ENCODE measurements at regions of chr5 and their contacts with region 1.

Region 1: GRCh38 chr5:5421961-5422818 is at the start of gene ICE1:
- DNase-seq: peak; percentile 95 to 98
- ATAC-seq: peak; percentile 88 to 95 (median 88)
- H3K4me3 ChIP-seq: peak within 1 kb of the TSS; percentile 83
- H3K4me3 Mint-ChIP-seq: no peak within 1 kb of the TSS
- H3K27ac ChIP-seq: peak within 1 kb of the TSS; percentile 100
- H3K27ac Mint-ChIP-seq: no peak within 1 kb of the TSS
- H3K4me1 ChIP-seq: peaks cover 27% of the 10 kb centered on the region
- H3K4me1 Mint-ChIP-seq: peaks cover 18 to 19% of the 10 kb centered on the region in 2 donors
- H3K27me3 ChIP-seq: no peaks in the 10 kb centered on the region
- H3K27me3 Mint-ChIP-seq: no peaks in the 10 kb centered on the region
- CTCF ChIP-seq: no peak
- total RNA-seq, gene ICE1: 29.7 to 44.5 (median 36.6) TPM

Region 2: DNA sequence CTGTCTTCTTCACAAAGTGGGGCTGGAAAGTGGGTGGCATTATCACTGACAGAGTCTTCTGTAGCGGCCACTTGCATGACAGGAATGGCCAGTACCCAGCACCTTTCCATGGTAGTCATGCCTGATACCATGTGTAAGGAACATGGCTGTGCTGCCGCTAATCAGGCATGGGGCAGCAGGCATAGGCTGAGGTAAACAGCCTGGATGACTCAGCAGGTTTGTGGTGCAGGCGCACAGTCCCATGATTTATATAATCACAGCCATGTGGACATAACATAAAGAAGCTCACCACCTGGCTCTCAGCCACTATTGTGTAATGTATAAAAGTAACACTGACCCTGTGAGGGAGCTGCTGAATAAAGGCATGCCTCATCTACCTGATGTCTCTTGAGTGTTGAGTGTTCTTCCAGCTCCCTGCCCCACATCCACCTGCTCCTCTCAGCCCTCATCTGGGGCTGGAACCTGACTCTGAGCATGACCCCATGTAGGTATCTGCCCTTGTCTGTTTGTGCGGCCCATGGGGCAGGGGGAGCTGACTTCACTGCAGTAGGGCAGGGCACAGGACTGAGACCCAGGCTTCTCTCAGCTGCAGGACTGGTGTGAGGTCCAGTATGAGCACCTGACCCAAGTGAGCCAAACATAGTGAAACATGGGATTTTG is 12.9 kb before region 1 on chr5:
- intact Hi-C with region 1: no loop called
- DNase-seq: peak in 1 of 2 donors; percentile 44
- ATAC-seq: no peak
- H3K4me3 ChIP-seq: no peak overlapping the region
- H3K4me3 Mint-ChIP-seq: no peak overlapping the region
- H3K27ac ChIP-seq: no peak overlapping the region
- H3K27ac Mint-ChIP-seq: no peak overlapping the region
- H3K4me1 ChIP-seq: no peaks in the 10 kb centered on the region
- H3K4me1 Mint-ChIP-seq: no peaks in the 10 kb centered on the region
- H3K27me3 ChIP-seq: no peaks in the 10 kb centered on the region
- H3K27me3 Mint-ChIP-seq: no peaks in the 10 kb centered on the region
- CTCF ChIP-seq: no peak

Region 3: GRCh38 chr5:5523066-5523505 is 100.9 kb after region 1 on chr5:
- intact Hi-C with region 1: loop called (anchors 1 kb)
- DNase-seq: peak in 1 of 2 donors; percentile 80
- ATAC-seq: peak; percentile 72 to 94 (median 92)
- H3K4me3 ChIP-seq: peak overlapping the region; percentile 31
- H3K4me3 Mint-ChIP-seq: peak overlapping the region; percentile 76
- H3K27ac ChIP-seq: peak overlapping the region; percentile 58
- H3K27ac Mint-ChIP-seq: peak overlapping the region; percentile 75 to 87
- H3K4me1 ChIP-seq: peaks cover 5% of the 10 kb centered on the region
- H3K4me1 Mint-ChIP-seq: peaks cover 13 to 17% of the 10 kb centered on the region in 2 donors
- H3K27me3 ChIP-seq: no peaks in the 10 kb centered on the region
- H3K27me3 Mint-ChIP-seq: no peaks in the 10 kb centered on the region
- CTCF ChIP-seq: no peak

Region 4: DNA sequence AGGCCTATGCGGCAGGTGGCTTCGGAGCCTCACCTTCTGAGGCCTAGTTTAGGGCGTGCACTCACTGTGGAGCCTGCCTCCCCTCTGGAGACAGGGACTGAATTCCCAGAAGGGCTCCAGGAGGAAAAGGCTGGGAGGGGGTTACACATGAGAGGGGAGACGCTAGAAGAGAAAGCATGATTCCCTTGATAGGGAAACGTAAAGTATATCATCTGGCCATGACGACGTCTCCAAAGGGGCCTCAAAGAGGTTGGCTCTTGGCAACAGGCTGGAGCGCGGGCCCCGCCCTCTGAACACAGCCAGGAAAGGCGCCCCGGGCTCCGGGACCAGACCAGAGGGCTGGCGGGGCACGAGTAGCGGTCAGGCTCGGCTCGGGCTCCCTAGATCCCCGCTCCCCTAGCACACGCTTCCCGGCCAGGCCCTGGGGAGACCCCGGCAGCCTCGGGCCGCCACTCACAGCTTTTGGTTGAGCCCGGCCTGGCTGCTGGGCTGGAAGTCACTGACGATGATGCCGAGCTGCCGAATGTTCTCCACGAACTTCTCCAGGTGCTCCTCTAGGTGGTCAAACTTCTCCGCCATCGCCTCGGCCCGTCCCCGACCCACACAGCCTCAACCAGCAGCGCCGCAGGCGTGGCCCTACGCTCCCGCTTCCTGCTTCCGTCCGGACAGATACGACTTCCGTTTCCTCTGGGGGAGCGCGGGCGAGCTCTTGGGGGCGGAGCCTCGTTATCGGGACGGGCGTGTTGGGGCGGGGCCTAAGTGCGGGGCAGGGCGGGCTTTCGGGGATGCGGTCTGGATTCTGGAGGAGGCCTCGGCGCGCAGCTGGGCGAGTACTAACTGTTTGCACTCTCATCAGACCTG is 955.9 kb after region 1 on chr5 and contains the start of gene MED10:
- intact Hi-C with region 1: loop called (anchors 1 kb)
- DNase-seq: peak; percentile 82 to 96
- ATAC-seq: peak; percentile 99
- H3K4me3 ChIP-seq: peak within 1 kb of the TSS; percentile 79
- H3K4me3 Mint-ChIP-seq: peak within 1 kb of the TSS; percentile 99
- H3K27ac ChIP-seq: peak within 1 kb of the TSS; percentile 71
- H3K27ac Mint-ChIP-seq: peak within 1 kb of the TSS; percentile 94 to 96
- H3K4me1 ChIP-seq: peaks cover 20% of the 10 kb centered on the region
- H3K4me1 Mint-ChIP-seq: peaks cover 48 to 54% of the 10 kb centered on the region in 2 donors
- H3K27me3 ChIP-seq: no peaks in the 10 kb centered on the region
- H3K27me3 Mint-ChIP-seq: peaks cover 6 to 19% of the 10 kb centered on the region in 2 donors
- CTCF ChIP-seq: no peak
- total RNA-seq, gene MED10: 64.4 to 68.5 (median 64.5) TPM